Activated T-helper 1 cell treated with anti-CD3 and anti-CD28 coated beads, Interleukin-12 subunit alpha, Interleukin-12 subunit beta, Interleukin-2, Interleukin-4 antibody, amounts not matched to agents 30 ng/mL and 10 ng/mL and 1 ng/mL, durations not matched to agents 14 hours and 24 hours and 36 hours (primary cell): ENCODE measurements at regions of chr4 and their contacts with region 1.

Region 1: GRCh38 chr4:67684839-67685531 is 16.0 kb downstream of the UBA6 start:
- DNase-seq: no peak
- H3K4me3 Mint-ChIP-seq: peak overlapping the region; percentile 4
- H3K27ac Mint-ChIP-seq: peak overlapping the region; percentile 72
- H3K4me1 Mint-ChIP-seq: peaks cover 41% of the 10 kb centered on the region
- H3K27me3 Mint-ChIP-seq: no peaks in the 10 kb centered on the region

Region 2: DNA sequence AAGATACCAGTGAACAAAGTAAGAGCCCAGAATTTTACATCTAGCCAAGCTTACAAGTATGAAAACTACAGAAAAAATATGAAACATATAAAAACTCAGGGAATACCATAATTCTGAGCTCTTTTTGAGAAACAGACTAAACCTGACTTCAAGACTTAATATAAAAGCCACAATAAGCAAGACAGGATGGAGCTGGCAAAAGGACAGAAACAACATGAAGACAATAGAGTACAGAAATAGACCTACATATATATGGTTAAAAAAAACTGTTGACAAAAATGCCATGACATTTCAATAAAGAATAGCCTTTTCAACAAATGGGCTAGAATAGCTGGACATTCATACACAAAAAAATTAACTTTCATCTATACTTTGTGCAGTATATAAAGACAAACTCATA is 33.4 kb before region 1 on chr4:
- intact Hi-C with region 1: loop called (anchors 5 kb)
- DNase-seq: no peak
- H3K4me3 Mint-ChIP-seq: no peak overlapping the region
- H3K27ac Mint-ChIP-seq: no peak overlapping the region
- H3K4me1 Mint-ChIP-seq: peaks cover 13% of the 10 kb centered on the region
- H3K27me3 Mint-ChIP-seq: no peaks in the 10 kb centered on the region

Region 3: GRCh38 chr4:67658302-67658701 is 26.7 kb before region 1 on chr4:
- intact Hi-C with region 1: loop called (anchors 1 kb)
- DNase-seq: no peak
- H3K4me3 Mint-ChIP-seq: no peak overlapping the region
- H3K27ac Mint-ChIP-seq: no peak overlapping the region
- H3K4me1 Mint-ChIP-seq: peaks cover 12% of the 10 kb centered on the region
- H3K27me3 Mint-ChIP-seq: no peaks in the 10 kb centered on the region